ENCODE measurements at regions of chr12 and their contacts with region 1.

Region 1: GRCh38 chr12:3803865-3804472 is 51.1 kb upstream of the CRACR2A start:
- DNase-seq: peak; percentile 27 to 63 (median 55)
- ATAC-seq: peak; percentile 82
- H3K4me3 ChIP-seq: no peak overlapping the region
- H3K4me3 Mint-ChIP-seq: no peak overlapping the region
- H3K27ac ChIP-seq: no peak overlapping the region
- H3K27ac Mint-ChIP-seq: no peak overlapping the region
- H3K4me1 ChIP-seq: no peaks in the 10 kb centered on the region
- H3K4me1 Mint-ChIP-seq: peaks cover 0 to 9% (median 0%) of the 10 kb centered on the region in 7 donors
- H3K27me3 ChIP-seq: no peaks in the 10 kb centered on the region
- H3K27me3 Mint-ChIP-seq: no peaks in the 10 kb centered on the region

Region 2: DNA sequence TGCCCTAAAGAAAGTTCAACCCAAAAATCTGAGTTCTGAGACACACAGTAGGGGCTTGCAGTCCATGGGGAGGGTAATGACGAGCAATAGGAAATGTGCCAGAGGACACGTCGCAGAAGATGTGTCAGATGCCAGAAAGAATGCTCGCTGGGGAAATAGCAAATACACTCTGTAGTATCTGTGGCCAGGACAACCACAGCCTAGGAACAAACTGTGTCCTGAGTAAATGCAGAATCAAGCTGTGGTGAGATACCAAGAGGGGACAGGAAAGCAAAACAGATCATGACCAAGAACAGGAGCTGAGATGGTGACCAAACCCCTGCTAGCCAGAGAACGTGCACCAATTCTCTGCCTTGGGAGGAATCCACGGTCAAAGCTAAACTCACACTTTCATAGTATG is 60.2 kb before region 1 on chr12:
- CTCF ChIA-PET with region 1: interaction called, 4 read pairs
- POLR2A ChIA-PET with region 1: no interaction called
- intact Hi-C with region 1: loop called in 1 of 2 experiments (anchors 2 kb)
- DNase-seq: no peak
- ATAC-seq: no peak
- H3K4me3 ChIP-seq: no peak overlapping the region
- H3K4me3 Mint-ChIP-seq: no peak overlapping the region
- H3K27ac ChIP-seq: no peak overlapping the region
- H3K27ac Mint-ChIP-seq: peak overlapping the region in 4 of 9 donors; percentile 11 to 68 (median 63)
- H3K4me1 ChIP-seq: peaks cover 10 to 34% of the 10 kb centered on the region in 2 donors
- H3K4me1 Mint-ChIP-seq: peaks cover 23 to 62% (median 50%) of the 10 kb centered on the region in 7 donors
- H3K27me3 ChIP-seq: no peaks in the 10 kb centered on the region
- H3K27me3 Mint-ChIP-seq: no peaks in the 10 kb centered on the region

Region 3: DNA sequence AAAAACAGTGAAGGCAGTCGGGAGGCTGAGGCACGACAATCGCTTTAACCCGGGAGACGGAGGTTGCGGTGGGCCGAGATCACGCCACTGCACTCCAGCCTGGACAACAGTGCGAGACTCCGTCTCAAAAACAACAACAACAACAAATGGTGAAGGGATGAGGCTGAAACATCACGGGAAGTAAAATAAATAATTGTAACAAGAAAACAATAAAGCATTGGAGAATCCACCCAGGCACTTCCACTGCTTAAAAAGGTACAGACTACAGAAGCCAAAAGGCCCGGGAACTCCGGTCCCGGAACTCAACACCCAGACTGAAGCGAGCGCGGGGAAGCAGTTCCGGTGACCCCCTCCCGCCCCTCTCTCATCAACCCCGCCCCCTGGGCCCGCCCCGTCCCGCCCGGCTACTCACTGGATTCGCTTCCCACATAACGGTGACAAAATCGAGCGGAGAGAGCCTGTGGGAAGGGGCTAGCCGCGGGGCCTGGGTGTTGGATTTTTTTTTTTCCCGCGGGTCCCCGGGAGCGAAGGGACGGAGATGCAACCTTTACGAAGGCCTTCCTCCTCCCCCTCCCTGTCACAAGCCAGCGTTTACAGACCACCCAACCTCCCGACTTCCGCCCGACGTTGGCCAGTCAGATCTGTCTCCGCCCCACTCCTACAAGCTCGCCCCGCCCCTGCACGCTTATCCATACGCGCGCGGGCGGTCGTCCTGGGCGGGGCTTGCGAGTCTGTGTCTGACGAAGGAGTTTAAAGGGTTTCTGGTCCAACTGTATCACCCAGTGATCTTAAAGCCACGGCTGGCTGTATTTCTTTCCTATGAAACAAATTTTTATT is 69.0 kb after region 1 on chr12 and contains the start of gene PARP11:
- CTCF ChIA-PET with region 1: no interaction called
- POLR2A ChIA-PET with region 1: no interaction called
- intact Hi-C with region 1: no loop called
- DNase-seq: peak; percentile 93 to 98 (median 96)
- ATAC-seq: peak; percentile 98
- H3K4me3 ChIP-seq: peak within 1 kb of the TSS; percentile 93
- H3K4me3 Mint-ChIP-seq: peak within 1 kb of the TSS; percentile 90 to 99 (median 94)
- H3K27ac ChIP-seq: peak within 1 kb of the TSS; percentile 96
- H3K27ac Mint-ChIP-seq: peak within 1 kb of the TSS; percentile 95 to 99 (median 98)
- H3K4me1 ChIP-seq: peaks cover 23 to 32% of the 10 kb centered on the region in 2 donors
- H3K4me1 Mint-ChIP-seq: peaks cover 31 to 58% (median 55%) of the 10 kb centered on the region in 7 donors
- H3K27me3 ChIP-seq: no peaks in the 10 kb centered on the region
- H3K27me3 Mint-ChIP-seq: peaks cover 0 to 6% (median 0%) of the 10 kb centered on the region in 5 donors
- total RNA-seq, gene PARP11: 21.5 to 37.4 (median 35.1) TPM